A549 (cell line): ENCODE measurements at regions of chr19 and their contacts with region 1.

Region 1: GRCh38 chr19:42881229-42881628 is 1.7 kb upstream of the PSG1 start:
- DNase-seq: peak in 1 of 2 experiments; percentile 57
- ATAC-seq: peak in 1 of 2 experiments; percentile 16; a peak in 1 of 6 replicates
- H3K4me3 ChIP-seq: no peak overlapping the region
- H3K27ac ChIP-seq: peak overlapping the region in 1 of 2 experiments; percentile 66; a peak in 2 of 6 replicates
- H3K4me1 ChIP-seq: peaks cover 13% of the 10 kb centered on the region; the same call in 2 of the 3 replicates
- CTCF ChIP-seq: peak; percentile 46
- EP300 ChIP-seq: no peak
- POLR2A ChIP-seq: no peak
- RAD21 ChIP-seq: peak; percentile 49 to 75; a peak in 4 of 5 replicates

Region 2: DNA sequence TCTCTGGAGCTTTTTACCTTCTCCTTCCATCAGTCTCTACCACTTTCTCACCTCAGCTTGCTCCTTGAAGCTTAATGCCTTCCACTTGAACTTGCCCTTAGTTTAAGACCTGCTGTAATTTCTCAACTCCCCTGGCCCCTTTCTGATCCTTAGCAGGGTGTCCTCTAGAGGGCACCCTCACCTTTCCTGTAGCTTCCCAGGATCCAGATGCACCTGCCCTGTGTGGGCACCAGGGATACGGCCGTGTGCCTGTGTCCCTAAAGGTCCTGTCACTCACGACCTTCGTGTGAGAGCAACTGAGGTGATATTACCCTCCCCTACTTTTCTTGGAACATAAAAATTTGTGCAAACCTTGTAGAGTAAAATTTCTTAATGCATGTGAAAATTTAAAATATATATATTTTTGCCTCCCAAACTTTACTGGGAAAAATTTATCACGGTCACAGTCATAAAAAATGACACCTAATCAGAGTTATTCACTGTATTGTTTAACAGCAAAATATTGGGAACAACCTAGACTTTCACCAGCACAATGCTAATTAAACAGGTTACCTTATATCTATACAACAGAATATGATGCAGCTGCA is 187.4 kb before region 1 on chr19:
- CTCF ChIA-PET with region 1: interaction called, 27 read pairs
- POLR2A ChIA-PET with region 1: no interaction called
- DNase-seq: peak; percentile 85 to 98
- ATAC-seq: peak; percentile 97 to 99
- H3K4me3 ChIP-seq: no peak overlapping the region
- H3K27ac ChIP-seq: no peak overlapping the region
- H3K4me1 ChIP-seq: no peaks in the 10 kb centered on the region
- CTCF ChIP-seq: peak; percentile 99
- EP300 ChIP-seq: no peak
- POLR2A ChIP-seq: no peak
- RAD21 ChIP-seq: peak; percentile 97 to 99

Region 3: DNA sequence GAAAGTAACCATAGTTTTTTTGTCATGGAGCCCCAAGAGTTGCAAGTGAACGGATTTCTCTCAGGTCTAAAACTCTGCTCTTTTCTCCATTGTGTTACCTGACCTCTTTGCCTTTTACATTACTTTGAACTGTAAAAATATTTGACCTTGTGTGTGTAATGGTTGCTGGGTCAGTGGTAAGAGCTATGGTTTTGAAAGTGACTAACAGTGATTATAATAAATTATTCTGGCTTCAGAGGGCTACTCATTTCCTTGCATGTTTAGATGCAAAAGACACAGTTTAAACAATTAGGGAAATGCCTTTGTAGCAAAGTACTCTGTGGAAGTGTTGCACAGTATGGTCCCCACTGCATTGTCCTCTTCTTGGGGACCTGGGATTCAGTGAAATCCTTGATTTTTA is 86.5 kb before region 1 on chr19:
- CTCF ChIA-PET with region 1: interaction called, 94 read pairs
- POLR2A ChIA-PET with region 1: no interaction called
- DNase-seq: no peak
- ATAC-seq: no peak
- H3K4me3 ChIP-seq: no peak overlapping the region
- H3K27ac ChIP-seq: peak overlapping the region; percentile 54 to 71; a peak in 3 of 6 replicates
- H3K4me1 ChIP-seq: peaks cover 2% of the 10 kb centered on the region; the same call in 1 of the 3 replicates
- CTCF ChIP-seq: no peak
- EP300 ChIP-seq: no peak
- POLR2A ChIP-seq: no peak
- RAD21 ChIP-seq: no peak

Region 4: GRCh38 chr19:42857561-42857901 is 23.7 kb before region 1 on chr19:
- CTCF ChIA-PET with region 1: interaction called, 15 read pairs
- POLR2A ChIA-PET with region 1: no interaction called
- DNase-seq: no peak
- ATAC-seq: no peak
- H3K4me3 ChIP-seq: no peak overlapping the region
- H3K27ac ChIP-seq: peak overlapping the region; percentile 47 to 70; a peak in 5 of 6 replicates
- H3K4me1 ChIP-seq: peaks cover 13% of the 10 kb centered on the region
- CTCF ChIP-seq: no peak; the same call in 2 of the 3 replicates
- EP300 ChIP-seq: no peak
- POLR2A ChIP-seq: no peak
- RAD21 ChIP-seq: no peak; a peak in 1 of 5 replicates